Naive thymus-derived CD8-positive, alpha-beta T cell (primary cell): ENCODE measurements at regions of chrX and their contacts with region 1.

Region 1: DNA sequence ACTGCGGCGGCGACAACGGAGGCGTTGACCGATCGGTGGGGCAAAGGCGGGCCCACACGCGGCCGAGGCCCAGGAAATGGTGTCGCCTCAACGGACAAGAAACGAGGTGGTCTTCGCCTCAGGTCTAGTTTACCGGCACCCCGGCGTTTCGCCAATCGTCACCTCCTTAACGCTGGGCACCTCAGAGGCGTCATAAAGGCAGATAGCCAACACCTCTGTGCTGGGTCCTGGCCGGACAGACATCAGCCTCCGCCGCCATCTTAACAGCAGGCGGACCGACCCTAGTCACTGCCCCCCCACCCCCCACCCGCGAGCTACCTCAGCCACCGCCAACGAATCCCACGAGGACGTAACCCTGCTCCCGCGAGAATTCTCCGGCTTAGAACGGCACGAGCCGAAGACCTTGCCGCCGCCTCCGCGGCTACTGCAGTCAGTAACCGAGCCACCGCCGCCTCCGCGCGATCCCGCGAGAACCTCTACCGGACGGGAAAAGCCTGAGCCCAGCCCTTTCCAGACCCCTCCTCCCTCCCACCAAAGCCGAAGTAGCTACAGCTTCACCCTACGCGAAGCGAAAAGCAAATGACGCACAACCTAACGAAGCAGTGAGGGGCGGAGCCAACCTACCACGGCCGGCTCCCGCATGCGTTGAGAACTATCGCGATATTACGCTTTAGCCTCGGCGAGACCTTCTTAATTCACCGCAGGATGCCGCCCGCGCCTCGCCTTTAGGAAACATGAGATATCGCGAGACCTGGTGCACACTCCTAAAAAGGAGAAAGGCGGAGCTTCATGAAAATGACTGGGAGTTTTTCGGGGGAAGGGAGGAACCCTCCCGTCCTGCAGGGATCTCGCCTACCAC is 2.7 kb downstream of the HUWE1 start:
- DNase-seq: peak; percentile 71 to 96 (median 92)
- ATAC-seq: peak; percentile 74 to 80
- H3K4me3 Mint-ChIP-seq: peak overlapping the region; percentile 81 to 95 (median 93)
- H3K27ac Mint-ChIP-seq: peak overlapping the region; percentile 95 to 100 (median 97)
- H3K4me1 Mint-ChIP-seq: peaks cover 15 to 47% (median 47%) of the 10 kb centered on the region in 4 donors
- H3K27me3 Mint-ChIP-seq: no peaks in the 10 kb centered on the region

Region 2: DNA sequence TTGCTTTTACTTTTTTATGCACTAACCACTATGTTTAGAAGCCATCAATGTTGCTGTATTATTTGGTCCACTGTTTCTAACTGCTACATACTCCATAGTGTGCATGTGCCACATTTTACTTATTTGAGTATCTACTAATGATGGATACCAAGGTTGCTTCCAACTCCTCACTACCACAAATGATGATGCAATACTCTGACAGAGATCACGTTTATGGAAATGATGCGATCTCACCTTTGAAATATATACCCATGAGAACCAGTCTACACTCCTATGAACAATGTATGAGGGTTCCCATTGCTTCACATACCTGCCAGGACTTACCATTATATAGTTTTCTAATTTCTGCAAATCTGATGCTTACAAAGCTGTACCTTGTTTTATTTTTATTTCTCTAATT is 41.4 kb before region 1 on chrX:
- POLR2A ChIA-PET with region 1: no interaction called
- DNase-seq: no peak
- ATAC-seq: no peak
- H3K4me3 Mint-ChIP-seq: no peak overlapping the region
- H3K27ac Mint-ChIP-seq: peak overlapping the region in 1 of 10 donors; percentile 37
- H3K4me1 Mint-ChIP-seq: peaks cover 0 to 5% (median 1%) of the 10 kb centered on the region in 4 donors
- H3K27me3 Mint-ChIP-seq: no peaks in the 10 kb centered on the region

Region 3: DNA sequence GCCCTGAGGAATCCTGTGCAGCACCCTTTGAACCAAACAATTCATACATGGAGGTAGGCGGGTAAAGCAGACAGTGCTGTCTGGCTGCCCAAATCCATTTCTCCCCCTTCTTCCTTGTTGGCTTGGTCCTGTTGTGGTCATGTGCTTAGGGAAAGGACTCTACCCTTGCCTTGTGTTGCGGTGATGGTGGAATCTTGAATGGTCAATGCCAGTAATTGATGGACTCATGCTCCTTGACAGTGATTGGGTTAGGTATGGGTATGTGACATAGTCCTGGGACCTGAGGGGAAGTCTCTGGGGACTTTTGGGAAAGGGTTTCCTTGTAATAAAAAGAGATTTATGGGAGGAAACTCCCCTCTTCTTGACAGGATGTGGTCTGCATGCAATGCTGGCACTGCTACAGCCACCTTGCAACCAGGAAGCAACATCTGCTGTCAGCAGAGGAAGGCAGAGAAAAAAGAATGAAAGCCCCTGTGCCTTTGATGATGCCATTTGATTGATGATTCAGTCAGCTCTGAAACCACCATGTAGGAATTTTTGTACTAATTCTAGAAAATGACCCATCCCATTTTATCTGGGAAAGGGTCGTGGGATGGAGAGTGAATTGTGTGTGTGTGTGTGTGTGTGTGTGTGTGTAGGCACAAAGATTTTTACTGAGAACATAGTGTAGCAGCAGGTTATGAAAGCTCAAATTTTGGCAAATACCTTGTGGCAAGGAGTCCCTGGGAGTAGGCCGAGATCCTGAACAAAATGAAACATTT is 32.7 kb after region 1 on chrX:
- POLR2A ChIA-PET with region 1: interaction called, 22 read pairs
- DNase-seq: peak in 9 of 10 donors; percentile 17 to 71 (median 43)
- ATAC-seq: peak; percentile 45 to 61
- H3K4me3 Mint-ChIP-seq: peak overlapping the region; percentile 42 to 88 (median 76)
- H3K27ac Mint-ChIP-seq: peak overlapping the region; percentile 87 to 96 (median 94)
- H3K4me1 Mint-ChIP-seq: peaks cover 22 to 50% (median 48%) of the 10 kb centered on the region in 4 donors
- H3K27me3 Mint-ChIP-seq: no peaks in the 10 kb centered on the region

Region 4: DNA sequence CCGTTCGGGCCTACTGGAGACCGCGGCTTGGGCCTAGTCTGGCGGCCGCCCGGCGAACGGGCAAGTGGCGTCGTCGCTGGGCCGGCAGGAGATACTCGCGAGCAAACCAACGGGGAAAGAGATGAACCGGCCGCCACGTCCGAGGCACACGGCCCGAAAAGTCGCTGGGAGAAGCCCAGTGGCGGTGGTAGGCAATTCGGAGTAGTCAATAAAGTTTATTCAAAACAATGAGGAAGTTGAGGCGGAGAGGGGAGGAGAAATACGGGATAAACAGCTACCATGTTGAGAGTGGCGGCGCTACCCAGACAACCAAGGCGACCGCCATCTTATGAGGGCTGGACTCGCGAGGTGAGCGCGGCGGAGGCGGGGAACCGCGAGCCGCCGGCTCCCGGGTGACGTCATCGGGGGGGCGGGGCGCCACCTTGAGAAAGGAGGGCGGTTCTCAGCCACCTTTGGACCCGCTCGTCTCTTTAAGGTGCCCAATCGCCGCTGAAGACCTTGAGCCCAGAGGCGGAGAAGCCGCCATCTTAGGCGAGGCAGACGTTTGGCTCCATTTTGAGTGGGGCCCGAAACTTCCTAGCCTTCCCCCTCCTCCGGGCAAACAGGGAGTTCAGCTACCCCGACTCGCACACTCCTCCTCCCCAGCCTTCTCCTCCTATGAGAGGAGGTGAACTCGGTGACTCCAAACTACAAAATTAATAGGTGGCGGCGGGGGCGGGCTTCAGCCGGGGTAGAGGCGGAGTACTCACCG is 360.5 kb after region 1 on chrX and contains the start of gene PHF8:
- POLR2A ChIA-PET with region 1: interaction called, 27 read pairs
- DNase-seq: peak; percentile 79 to 97 (median 94)
- ATAC-seq: peak; percentile 81 to 83
- H3K4me3 Mint-ChIP-seq: peak within 1 kb of the TSS; percentile 88 to 96 (median 92)
- H3K27ac Mint-ChIP-seq: peak within 1 kb of the TSS; percentile 93 to 99 (median 97)
- H3K4me1 Mint-ChIP-seq: peaks cover 4 to 21% (median 15%) of the 10 kb centered on the region in 4 donors
- H3K27me3 Mint-ChIP-seq: no peaks in the 10 kb centered on the region
- polyA plus RNA-seq, gene PHF8: 12.0 to 16.3 (median 13.1) TPM